Aorta (tissue), 5 donors: ENCODE measurements at regions of chr3 and their contacts with region 1.

Region 1: GRCh38 chr3:149401215-149401925 is 23.9 kb upstream of the TM4SF1 start:
- DNase-seq: no peak
- ATAC-seq: peak; percentile 71
- H3K4me3 ChIP-seq: no peak overlapping the region
- H3K27ac ChIP-seq: peak overlapping the region; percentile 7 to 93
- H3K4me1 ChIP-seq: peaks cover 0 to 8% of the 10 kb centered on the region in 2 donors
- H3K27me3 ChIP-seq: no peaks in the 10 kb centered on the region

Region 2: GRCh38 chr3:149377408-149378377 is 23.7 kb before region 1 on chr3 and contains the start of gene TM4SF1:
- intact Hi-C with region 1: loop called in 1 of 2 experiments (anchors 1 kb)
- DNase-seq: peak; percentile 84 to 85
- ATAC-seq: peak; percentile 83
- H3K4me3 ChIP-seq: peak within 1 kb of the TSS; percentile 83 to 99
- H3K27ac ChIP-seq: peak within 1 kb of the TSS; percentile 82 to 98
- H3K4me1 ChIP-seq: peaks cover 5 to 6% of the 10 kb centered on the region in 2 donors
- H3K27me3 ChIP-seq: no peaks in the 10 kb centered on the region
- total RNA-seq, gene TM4SF1: 213 TPM